Activated CD4-positive, alpha-beta memory T cell treated with anti-CD3 and anti-CD28 coated beads for 36 hours (primary cell): ENCODE measurements at regions of chr18 and their contacts with region 1.

Region 1: DNA sequence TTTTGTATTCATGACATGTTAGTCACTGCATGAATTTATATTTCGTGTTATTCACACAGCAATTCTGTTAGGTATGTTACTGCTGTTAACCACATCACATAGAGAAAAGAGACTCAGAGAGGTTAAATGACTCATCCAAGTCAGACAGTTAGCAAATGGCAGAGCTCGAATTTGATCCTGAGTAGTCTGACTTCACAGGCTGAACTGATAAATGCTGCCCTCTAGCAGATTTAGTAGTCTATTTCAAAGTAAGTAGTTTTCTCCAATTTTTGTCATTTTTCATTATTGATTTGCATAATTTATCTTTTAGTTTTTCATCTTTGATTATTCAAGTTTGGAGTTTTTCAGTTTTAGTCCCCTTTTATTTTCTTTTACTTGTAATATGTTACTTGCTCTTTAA is 58.3 kb downstream of the WDR7 start:
- DNase-seq: peak; percentile 29
- H3K4me3 Mint-ChIP-seq: no peak overlapping the region
- H3K27ac Mint-ChIP-seq: no peak overlapping the region
- H3K4me1 Mint-ChIP-seq: peaks cover 7% of the 10 kb centered on the region
- H3K27me3 Mint-ChIP-seq: no peaks in the 10 kb centered on the region

Region 2: GRCh38 chr18:56638271-56639093 is 71.0 kb before region 1 on chr18 and contains the start of gene TXNL1:
- CTCF ChIA-PET with region 1: interaction called, 8 read pairs
- POLR2A ChIA-PET with region 1: no interaction called
- intact Hi-C with region 1: loop called (anchors 1 kb)
- DNase-seq: peak; percentile 100
- H3K4me3 Mint-ChIP-seq: peak within 1 kb of the TSS; percentile 99
- H3K27ac Mint-ChIP-seq: peak within 1 kb of the TSS; percentile 94
- H3K4me1 Mint-ChIP-seq: peaks cover 44% of the 10 kb centered on the region
- H3K27me3 Mint-ChIP-seq: no peaks in the 10 kb centered on the region
- total RNA-seq, gene TXNL1: 68.7 to 68.9 TPM